MCF 10A (cell line): ENCODE measurements at regions of chr12 and their contacts with region 1.

Region 1: DNA sequence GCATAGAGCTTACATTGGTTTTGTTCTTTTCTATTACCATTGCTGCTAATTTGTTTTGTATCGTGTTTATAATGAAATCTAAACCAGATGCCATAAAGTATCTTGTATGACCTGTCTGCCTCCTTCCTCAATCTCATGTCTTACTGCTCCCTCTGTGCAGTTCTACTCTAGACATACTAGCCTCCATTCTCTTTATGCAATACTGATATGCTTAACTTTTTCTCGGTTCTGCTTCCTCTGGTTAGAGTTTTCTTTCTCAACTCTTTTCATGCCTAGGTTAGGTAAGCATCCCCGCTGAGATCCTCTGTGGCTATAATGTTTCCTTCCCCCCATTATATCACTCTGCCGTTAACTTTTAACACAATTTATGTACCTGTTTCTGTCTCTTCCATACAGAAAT is 852.3 kb downstream of the TRHDE start:
- DNase-seq: no peak
- H3K4me3 Mint-ChIP-seq: no peak overlapping the region
- H3K27ac Mint-ChIP-seq: no peak overlapping the region
- H3K4me1 Mint-ChIP-seq: no peaks in the 10 kb centered on the region
- H3K27me3 Mint-ChIP-seq: no peaks in the 10 kb centered on the region
- CTCF ChIP-seq: no peak

Region 2: GRCh38 chr12:73076760-73077159 is 47.7 kb before region 1 on chr12:
- CTCF ChIA-PET with region 1: no interaction called
- POLR2A ChIA-PET with region 1: no interaction called
- intact Hi-C with region 1: no loop called
- DNase-seq: no peak
- H3K4me3 Mint-ChIP-seq: no peak overlapping the region
- H3K27ac Mint-ChIP-seq: no peak overlapping the region
- H3K4me1 Mint-ChIP-seq: peaks cover 4% of the 10 kb centered on the region
- H3K27me3 Mint-ChIP-seq: no peaks in the 10 kb centered on the region
- CTCF ChIP-seq: no peak

Region 3: DNA sequence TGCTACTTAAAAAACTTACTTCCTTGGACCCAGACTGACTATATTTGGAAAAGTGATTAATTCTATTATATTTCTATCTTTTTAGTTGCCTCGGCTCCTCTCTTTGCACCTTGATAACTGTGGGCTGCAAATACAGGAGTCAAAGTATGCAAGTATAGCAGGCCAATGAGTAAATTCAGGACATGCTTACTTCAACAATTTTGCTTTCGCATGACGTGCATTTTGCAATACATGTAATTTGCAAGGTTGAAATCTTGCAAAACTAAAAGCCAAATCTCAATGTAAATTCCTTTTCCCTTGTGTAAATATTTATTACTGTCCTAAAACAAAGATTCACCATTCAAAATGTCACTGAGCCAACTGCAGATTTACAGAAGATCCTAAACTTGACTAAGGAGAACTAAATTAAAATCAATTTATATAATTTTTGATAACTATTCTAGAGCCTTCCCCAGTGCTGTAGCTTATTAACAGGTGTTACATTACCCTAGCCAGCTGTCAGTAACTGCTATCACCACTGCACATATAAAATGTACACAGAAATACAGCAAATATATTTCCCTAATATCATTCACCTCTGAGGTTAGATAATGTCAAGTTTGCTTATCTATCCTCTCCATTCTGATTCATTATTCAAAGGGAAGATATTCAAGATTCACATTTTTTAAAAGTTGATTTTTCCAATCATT is 217.2 kb after region 1 on chr12:
- CTCF ChIA-PET with region 1: no interaction called
- POLR2A ChIA-PET with region 1: no interaction called
- intact Hi-C with region 1: loop called (anchors 10 kb)
- DNase-seq: no peak
- H3K4me3 Mint-ChIP-seq: no peak overlapping the region
- H3K27ac Mint-ChIP-seq: no peak overlapping the region
- H3K4me1 Mint-ChIP-seq: no peaks in the 10 kb centered on the region
- H3K27me3 Mint-ChIP-seq: no peaks in the 10 kb centered on the region
- CTCF ChIP-seq: no peak